Psoas muscle (tissue), 8 donors: ENCODE measurements at regions of chr2 and their contacts with region 1.

Region 1: GRCh38 chr2:10434886-10435819 is 13.0 kb downstream of the ODC1 start:
- DNase-seq: peak; percentile 73 to 85
- ATAC-seq: peak; percentile 64 to 84 (median 76)
- H3K4me3 ChIP-seq: no peak overlapping the region
- H3K27ac ChIP-seq: no peak overlapping the region
- H3K4me1 ChIP-seq: no peaks in the 10 kb centered on the region
- H3K27me3 ChIP-seq: peaks cover 0 to 17% (median 5%) of the 10 kb centered on the region in 3 donors
- CTCF ChIP-seq: peak; percentile 98

Region 2: GRCh38 chr2:9984217-9984739 is 450.9 kb before region 1 on chr2:
- intact Hi-C with region 1: loop called in 1 of 2 experiments (anchors 10 kb)
- DNase-seq: no peak
- ATAC-seq: peak; percentile 66 to 85 (median 71)
- H3K4me3 ChIP-seq: no peak overlapping the region
- H3K27ac ChIP-seq: no peak overlapping the region
- H3K4me1 ChIP-seq: peaks cover 19% of the 10 kb centered on the region
- H3K27me3 ChIP-seq: no peaks in the 10 kb centered on the region
- CTCF ChIP-seq: peak; percentile 85

Region 3: GRCh38 chr2:10072656-10073480 is 362.3 kb before region 1 on chr2:
- intact Hi-C with region 1: loop called (anchors 2 to 5 kb)
- DNase-seq: peak; percentile 75 to 86
- ATAC-seq: peak; percentile 92 to 97 (median 96)
- H3K4me3 ChIP-seq: no peak overlapping the region
- H3K27ac ChIP-seq: no peak overlapping the region
- H3K4me1 ChIP-seq: no peaks in the 10 kb centered on the region
- H3K27me3 ChIP-seq: peaks cover 0 to 25% (median 6%) of the 10 kb centered on the region in 3 donors
- CTCF ChIP-seq: peak; percentile 87

Region 4: GRCh38 chr2:10122386-10123280 is 312.5 kb before region 1 on chr2 and contains the start of gene RRM2:
- intact Hi-C with region 1: loop called (anchors 2 kb)
- DNase-seq: peak; percentile 91 to 97
- ATAC-seq: peak; percentile 89 to 92 (median 90)
- H3K4me3 ChIP-seq: peak within 1 kb of the TSS; percentile 69
- H3K27ac ChIP-seq: no peak within 1 kb of the TSS
- H3K4me1 ChIP-seq: peaks cover 27% of the 10 kb centered on the region
- H3K27me3 ChIP-seq: peaks cover 0 to 12% (median 2%) of the 10 kb centered on the region in 3 donors
- CTCF ChIP-seq: no peak
- total RNA-seq, gene RRM2: 0.27 to 1.3 TPM in 2 of 4 donors, not detected in the others

Region 5: DNA sequence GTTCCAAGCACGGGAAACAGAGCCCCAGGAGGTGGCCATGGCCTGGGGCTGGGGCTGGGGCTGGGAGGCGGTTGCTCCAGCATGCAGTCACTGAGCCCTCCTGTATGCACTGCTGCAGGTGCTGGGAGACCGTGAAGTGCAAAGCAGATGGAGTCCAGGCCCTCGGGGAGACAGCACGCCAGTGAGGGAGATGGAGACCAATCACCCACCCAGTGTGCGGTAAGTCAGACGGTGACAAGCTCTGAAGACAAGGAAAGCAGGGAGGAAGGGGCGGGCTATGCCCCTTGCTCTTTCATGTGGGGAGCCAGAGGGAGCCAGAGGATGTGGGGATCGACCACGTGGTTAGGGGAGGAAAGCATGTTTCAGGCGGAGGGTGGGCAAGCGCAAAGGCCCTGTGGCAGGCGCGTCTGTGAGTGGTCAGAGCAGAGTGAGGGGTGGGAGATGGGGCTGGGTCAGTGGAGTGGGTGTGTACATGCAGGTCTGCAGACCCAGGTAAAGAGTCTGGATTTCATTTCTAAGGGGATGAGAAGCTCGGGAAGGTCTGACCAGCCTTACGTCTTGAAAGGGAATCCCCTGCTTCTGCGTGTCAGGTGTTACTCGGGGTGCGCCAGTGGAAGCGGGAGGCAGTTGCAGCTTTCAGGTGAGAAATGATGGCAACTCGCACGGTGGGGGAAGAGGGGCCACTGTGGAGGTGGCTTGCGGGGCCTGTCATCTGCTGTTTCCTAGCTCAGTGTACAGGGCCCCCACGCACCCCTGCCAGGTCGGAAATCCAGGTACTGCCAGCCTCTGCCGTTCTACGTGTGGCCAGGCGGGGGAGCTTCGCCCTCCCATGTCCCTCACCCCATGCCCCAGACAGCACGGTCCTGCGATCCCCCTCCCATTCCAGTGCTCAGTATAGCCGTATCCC is 293.2 kb before region 1 on chr2:
- intact Hi-C with region 1: loop called in 1 of 2 experiments (anchors 5 kb)
- DNase-seq: no peak
- ATAC-seq: peak; percentile 54 to 80 (median 65)
- H3K4me3 ChIP-seq: no peak overlapping the region
- H3K27ac ChIP-seq: no peak overlapping the region
- H3K4me1 ChIP-seq: no peaks in the 10 kb centered on the region
- H3K27me3 ChIP-seq: no peaks in the 10 kb centered on the region
- CTCF ChIP-seq: peak; percentile 28

Region 6: DNA sequence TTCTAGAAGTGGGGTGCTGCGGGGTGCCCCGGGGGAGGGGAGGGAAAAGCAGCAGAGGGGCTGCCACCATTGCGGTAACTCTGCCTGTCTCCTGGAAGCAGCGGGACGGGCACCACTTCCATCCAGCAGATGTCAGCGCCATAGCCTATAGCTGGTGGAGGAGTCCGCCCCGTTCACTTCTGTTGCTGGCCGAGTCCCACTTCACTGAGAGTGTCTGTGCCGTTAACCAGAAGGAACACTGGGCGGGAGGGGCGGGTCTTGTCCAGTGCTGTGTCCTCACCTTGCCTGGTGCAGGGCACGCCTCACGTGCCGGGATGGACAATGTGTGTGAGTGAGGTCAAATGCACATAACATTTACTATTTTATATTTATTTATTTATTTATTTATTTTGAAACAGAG is 32.2 kb after region 1 on chr2:
- intact Hi-C with region 1: no loop called
- DNase-seq: no peak
- ATAC-seq: no peak
- H3K4me3 ChIP-seq: no peak overlapping the region
- H3K27ac ChIP-seq: no peak overlapping the region
- H3K4me1 ChIP-seq: no peaks in the 10 kb centered on the region
- H3K27me3 ChIP-seq: no peaks in the 10 kb centered on the region
- CTCF ChIP-seq: no peak

Region 7: GRCh38 chr2:10599924-10600323 is 164.8 kb after region 1 on chr2:
- intact Hi-C with region 1: no loop called
- DNase-seq: no peak
- ATAC-seq: no peak
- H3K4me3 ChIP-seq: no peak overlapping the region
- H3K27ac ChIP-seq: no peak overlapping the region
- H3K4me1 ChIP-seq: no peaks in the 10 kb centered on the region
- H3K27me3 ChIP-seq: no peaks in the 10 kb centered on the region
- CTCF ChIP-seq: no peak